CD8-positive, alpha-beta T cell (primary cell): ENCODE measurements at regions of chr15 and their contacts with region 1.

Region 1: GRCh38 chr15:66919421-66919820 is 146.0 kb upstream of the SMAD3 start:
- DNase-seq: no peak
- ATAC-seq: no peak
- H3K4me3 ChIP-seq: no peak overlapping the region
- H3K4me3 Mint-ChIP-seq: no peak overlapping the region
- H3K27ac ChIP-seq: no peak overlapping the region
- H3K27ac Mint-ChIP-seq: no peak overlapping the region
- H3K4me1 ChIP-seq: no peaks in the 10 kb centered on the region
- H3K4me1 Mint-ChIP-seq: peaks cover 6% of the 10 kb centered on the region
- H3K27me3 ChIP-seq: no peaks in the 10 kb centered on the region
- H3K27me3 Mint-ChIP-seq: peaks cover 10% of the 10 kb centered on the region
- CTCF ChIP-seq: no peak

Region 2: GRCh38 chr15:66905185-66905584 is 14.2 kb before region 1 on chr15:
- CTCF ChIA-PET with region 1: interaction called, 16 read pairs
- POLR2A ChIA-PET with region 1: no interaction called
- intact Hi-C with region 1: no loop called
- DNase-seq: no peak
- ATAC-seq: no peak
- H3K4me3 ChIP-seq: no peak overlapping the region
- H3K4me3 Mint-ChIP-seq: no peak overlapping the region
- H3K27ac ChIP-seq: no peak overlapping the region
- H3K27ac Mint-ChIP-seq: no peak overlapping the region
- H3K4me1 ChIP-seq: no peaks in the 10 kb centered on the region
- H3K4me1 Mint-ChIP-seq: peaks cover 2% of the 10 kb centered on the region
- H3K27me3 ChIP-seq: no peaks in the 10 kb centered on the region
- H3K27me3 Mint-ChIP-seq: peaks cover 4% of the 10 kb centered on the region
- CTCF ChIP-seq: no peak

Region 3: GRCh38 chr15:67033571-67034044 is 114.2 kb after region 1 on chr15:
- CTCF ChIA-PET with region 1: no interaction called
- POLR2A ChIA-PET with region 1: no interaction called
- intact Hi-C with region 1: no loop called
- DNase-seq: peak in 7 of 9 experiments; percentile 21 to 64 (median 33)
- ATAC-seq: peak; percentile 58
- H3K4me3 ChIP-seq: peak overlapping the region; percentile 33 to 37
- H3K4me3 Mint-ChIP-seq: peak overlapping the region; percentile 68
- H3K27ac ChIP-seq: no peak overlapping the region
- H3K27ac Mint-ChIP-seq: no peak overlapping the region
- H3K4me1 ChIP-seq: peaks cover 12% of the 10 kb centered on the region
- H3K4me1 Mint-ChIP-seq: peaks cover 16% of the 10 kb centered on the region
- H3K27me3 ChIP-seq: peaks cover 3 to 4% of the 10 kb centered on the region in 2 experiments
- H3K27me3 Mint-ChIP-seq: peaks cover 2% of the 10 kb centered on the region
- CTCF ChIP-seq: no peak